Dendritic cell treated with granulocyte-macrophage colony-stimulating factor and Interleukin-4, amounts not matched to agents 40 ng/mL and 50 ng/mL, for 4 days (primary cell): ENCODE measurements at regions of chr9 and their contacts with region 1.

Region 1: GRCh38 chr9:70504834-70505233 is 90.4 kb upstream of the KLF9 start:
- H3K4me3 Mint-ChIP-seq: no peak overlapping the region
- H3K27ac Mint-ChIP-seq: peak overlapping the region; percentile 88
- H3K4me1 Mint-ChIP-seq: peaks cover 29% of the 10 kb centered on the region
- H3K27me3 Mint-ChIP-seq: no peaks in the 10 kb centered on the region

Region 2: DNA sequence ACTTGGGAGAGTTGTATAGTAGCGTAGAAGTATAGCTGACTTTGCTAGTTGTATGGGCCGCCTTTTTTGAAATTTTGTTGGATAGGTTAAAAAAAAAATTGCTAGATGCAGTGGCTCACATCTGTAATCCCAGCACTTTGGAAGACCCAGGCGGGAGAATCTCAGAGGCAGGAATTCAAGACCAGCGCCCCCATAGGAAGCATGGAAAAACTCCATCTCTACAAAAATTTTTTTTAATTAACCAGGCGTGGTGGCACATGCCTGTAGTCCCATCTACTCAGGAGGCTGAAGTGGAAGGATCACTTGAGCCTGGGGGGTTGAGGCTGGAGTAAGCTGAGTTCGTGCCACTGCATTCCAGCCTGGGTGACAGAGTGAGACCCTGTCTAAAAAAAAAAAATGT is 186.8 kb before region 1 on chr9:
- intact Hi-C with region 1: no loop called
- H3K4me3 Mint-ChIP-seq: no peak overlapping the region
- H3K27ac Mint-ChIP-seq: no peak overlapping the region
- H3K4me1 Mint-ChIP-seq: no peaks in the 10 kb centered on the region
- H3K27me3 Mint-ChIP-seq: no peaks in the 10 kb centered on the region

Region 3: GRCh38 chr9:70549926-70550325 is 45.1 kb after region 1 on chr9:
- intact Hi-C with region 1: loop called (anchors 5 kb)
- H3K4me3 Mint-ChIP-seq: no peak overlapping the region
- H3K27ac Mint-ChIP-seq: peak overlapping the region; percentile 79
- H3K4me1 Mint-ChIP-seq: peaks cover 61% of the 10 kb centered on the region
- H3K27me3 Mint-ChIP-seq: no peaks in the 10 kb centered on the region